ENCODE measurements at regions of chr13 and their contacts with region 1.

Region 1: DNA sequence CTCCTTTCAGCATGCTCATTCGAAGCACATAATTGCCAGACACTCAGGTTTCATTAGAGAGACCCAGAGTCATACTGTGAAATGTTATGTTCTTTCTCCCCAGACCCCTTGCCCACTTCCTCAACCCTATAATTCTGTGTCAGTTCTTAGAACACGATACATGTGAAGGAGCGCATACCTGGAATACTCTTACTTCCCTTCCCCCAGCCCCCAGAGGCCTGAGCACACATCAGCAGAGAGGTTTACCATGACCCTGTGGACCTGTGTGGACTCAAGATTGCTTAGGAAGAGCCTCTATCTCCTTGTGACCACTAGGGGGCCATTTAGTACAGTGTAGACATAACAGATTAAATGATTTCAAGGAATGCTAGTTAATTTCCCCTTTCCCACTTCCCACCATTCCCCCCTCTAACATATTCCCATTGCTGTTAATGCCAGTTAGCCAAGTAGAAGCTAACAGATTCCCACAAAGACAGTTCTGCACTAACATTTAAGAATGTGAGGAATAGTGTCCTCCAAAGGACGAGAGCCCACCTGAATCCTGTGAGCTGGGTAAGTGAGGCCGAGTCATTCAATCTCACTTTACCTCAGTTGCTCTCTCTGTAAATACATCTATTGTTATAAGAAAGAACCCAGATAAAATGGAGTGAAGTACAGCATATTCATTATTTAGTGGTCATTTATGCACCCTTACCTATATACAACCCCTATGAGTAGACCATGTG is 154.2 kb upstream of the MAB21L1 start:
- DNase-seq: no peak
- H3K4me3 ChIP-seq: no peak overlapping the region
- H3K27me3 ChIP-seq: no peaks in the 10 kb centered on the region
- CTCF ChIP-seq: peak; percentile 84

Region 2: DNA sequence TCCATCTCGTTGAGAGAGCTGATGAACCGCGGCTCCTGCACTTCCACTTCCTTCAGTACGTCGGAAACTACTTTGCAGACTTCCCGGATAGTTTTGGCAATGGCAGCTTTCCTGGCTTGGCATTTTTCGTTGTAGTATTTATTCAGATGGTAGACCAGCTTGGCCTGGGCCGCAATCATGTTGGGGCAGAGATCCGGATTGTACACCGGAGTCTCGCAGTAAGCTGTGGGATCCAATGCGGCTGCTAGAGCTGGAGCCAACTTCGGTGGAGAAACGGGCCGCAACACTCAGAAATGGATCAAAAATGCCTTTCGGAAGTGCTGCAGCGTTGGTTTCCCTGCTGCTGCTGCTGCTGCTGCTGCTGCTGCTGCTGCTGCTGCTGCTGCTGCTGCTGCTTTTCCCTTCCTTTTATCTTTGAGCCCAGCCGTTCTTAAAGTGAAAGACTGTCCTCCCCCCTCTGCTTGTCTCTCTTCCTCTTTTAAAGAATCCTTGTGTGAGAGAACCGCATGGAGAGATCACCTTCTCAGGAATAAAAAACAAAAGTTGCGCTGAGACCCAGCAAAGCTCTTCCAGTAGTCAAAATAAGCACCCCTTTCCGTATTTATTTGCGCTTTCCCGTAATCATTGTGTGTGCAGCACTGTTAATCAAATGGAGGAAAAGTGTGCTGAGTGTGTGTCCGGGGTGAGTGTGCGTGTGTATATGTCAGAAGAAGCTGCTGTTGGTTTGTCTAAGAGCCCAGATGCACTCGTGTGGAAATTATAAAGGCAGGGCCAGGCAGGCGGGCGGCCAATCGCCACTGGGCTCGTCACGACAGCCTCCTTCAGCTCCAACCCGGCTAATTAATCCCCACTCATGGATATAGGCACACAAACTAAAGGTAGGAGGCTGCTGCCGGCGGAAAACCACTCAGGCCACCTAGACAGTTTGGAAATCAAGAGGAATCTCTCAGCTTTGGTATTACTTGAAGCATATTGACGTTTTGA is 154.5 kb before region 1 on chr13 and contains the start of gene MAB21L1:
- CTCF ChIA-PET with region 1: interaction called, 10 read pairs
- POLR2A ChIA-PET with region 1: no interaction called
- DNase-seq: peak; percentile 83
- H3K4me3 ChIP-seq: peak within 1 kb of the TSS; percentile 94
- H3K27me3 ChIP-seq: no peaks in the 10 kb centered on the region
- CTCF ChIP-seq: no peak
- polyA plus RNA-seq, gene MAB21L1: 65.6 and 67.9 TPM in 2 replicates

Region 3: DNA sequence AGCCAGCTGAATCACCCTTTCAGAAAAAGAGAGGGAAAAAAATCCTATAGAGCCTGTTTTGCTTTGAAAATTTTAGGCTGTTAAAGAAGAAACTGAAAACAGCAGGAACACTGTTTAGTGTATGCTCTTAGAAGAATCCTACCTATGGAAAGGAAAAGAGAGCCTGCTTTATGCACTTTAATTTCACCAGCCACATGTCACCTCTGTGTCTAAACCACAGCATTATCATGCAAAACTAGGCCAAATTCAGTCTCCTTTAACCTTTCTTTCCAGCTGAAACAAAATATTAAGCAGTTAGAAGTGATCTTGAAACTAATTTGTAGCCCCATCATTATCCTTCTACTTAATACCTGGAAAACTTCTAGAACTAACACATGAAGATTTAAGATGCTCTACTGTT is 57.1 kb before region 1 on chr13:
- CTCF ChIA-PET with region 1: no interaction called
- POLR2A ChIA-PET with region 1: no interaction called
- DNase-seq: no peak
- H3K4me3 ChIP-seq: no peak overlapping the region
- H3K27me3 ChIP-seq: no peaks in the 10 kb centered on the region
- CTCF ChIP-seq: no peak

Region 4: DNA sequence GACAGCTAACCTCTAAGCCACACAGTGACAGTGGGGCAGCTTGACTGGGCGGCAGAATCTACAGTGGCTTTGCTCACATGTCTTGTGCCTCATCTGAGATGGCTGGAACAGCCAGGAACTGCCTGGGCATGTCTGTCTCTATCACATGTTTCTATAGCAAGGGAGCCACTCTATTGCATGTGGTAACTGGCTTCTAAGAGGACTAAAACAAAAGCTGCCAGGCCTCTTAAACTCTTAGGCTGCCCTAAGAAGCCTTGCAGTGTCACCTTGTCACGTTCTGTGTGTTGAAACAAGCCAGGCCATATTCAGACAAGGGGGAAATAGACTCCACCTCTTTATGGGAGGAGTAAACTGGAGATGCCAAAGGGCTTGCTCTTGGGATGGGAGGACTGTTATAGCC is 31.3 kb before region 1 on chr13:
- CTCF ChIA-PET with region 1: interaction called, 14 read pairs
- POLR2A ChIA-PET with region 1: no interaction called
- DNase-seq: no peak
- H3K4me3 ChIP-seq: no peak overlapping the region
- H3K27me3 ChIP-seq: no peaks in the 10 kb centered on the region
- CTCF ChIP-seq: no peak

Region 5: GRCh38 chr13:35649162-35649561 is 18.4 kb after region 1 on chr13:
- CTCF ChIA-PET with region 1: interaction called, 17 read pairs
- POLR2A ChIA-PET with region 1: interaction called, 7 read pairs
- DNase-seq: no peak
- H3K4me3 ChIP-seq: no peak overlapping the region
- H3K27me3 ChIP-seq: no peaks in the 10 kb centered on the region
- CTCF ChIP-seq: no peak

Region 6: DNA sequence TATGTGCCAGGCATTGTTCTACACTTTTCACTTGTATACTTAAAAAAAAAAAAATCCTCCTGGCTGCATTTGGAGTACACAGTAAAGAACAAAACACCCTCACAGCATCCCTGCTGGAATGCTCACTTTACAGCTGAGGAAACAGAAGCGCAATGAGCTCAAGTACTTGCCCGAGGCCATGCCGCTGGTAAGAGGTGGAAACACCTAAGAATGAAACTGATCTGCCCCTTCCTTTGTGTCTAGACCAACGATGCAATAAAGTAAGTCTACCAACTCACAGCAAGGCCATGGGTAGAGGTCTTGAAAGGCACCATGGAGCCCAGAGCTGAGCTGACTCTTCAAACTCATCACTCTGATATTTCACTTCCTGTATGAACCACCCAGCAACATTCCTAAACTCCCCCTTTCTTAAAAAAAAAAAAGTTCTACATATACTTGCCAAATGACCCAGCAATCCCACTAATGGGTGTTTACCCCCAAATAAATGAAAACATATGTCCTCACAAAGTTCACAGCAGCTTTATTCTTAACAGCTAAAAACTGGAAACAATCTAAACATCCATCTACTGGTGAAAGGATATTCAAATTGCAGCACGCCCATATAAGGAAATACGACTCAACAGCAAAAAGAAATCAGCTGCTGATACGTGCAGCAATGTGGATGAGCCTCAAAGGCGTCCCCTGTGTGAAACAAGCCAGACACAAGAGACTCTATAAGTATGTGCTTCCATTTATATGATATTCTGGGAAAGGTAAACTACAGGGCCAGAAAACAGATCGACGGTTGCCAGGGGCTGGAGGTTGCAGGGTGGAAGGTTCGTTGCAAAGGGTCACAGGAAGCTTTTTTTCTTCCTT is 82.4 kb after region 1 on chr13:
- CTCF ChIA-PET with region 1: interaction called, 29 read pairs
- POLR2A ChIA-PET with region 1: no interaction called
- DNase-seq: peak; percentile 96
- H3K4me3 ChIP-seq: 0 out of 2 replicates have a peak overlapping the region, but pooled peaks have one; percentile 18
- H3K27me3 ChIP-seq: no peaks in the 10 kb centered on the region
- CTCF ChIP-seq: no peak; the same call in 1 of the 2 replicates

Measured in BJ (cell line).